ENCODE measurements at regions of chr19 and their contacts with region 1.

Region 1: GRCh38 chr19:18304458-18305310 is 18.2 kb downstream of the LSM4 start:
- DNase-seq: peak in 1 of 2 experiments; percentile 88
- H3K4me3 ChIP-seq: peak overlapping the region; percentile 8; the same call in 1 of the 2 replicates
- H3K27ac ChIP-seq: peak overlapping the region; percentile 48
- H3K4me1 ChIP-seq: peaks cover 42% of the 10 kb centered on the region
- H3K27me3 ChIP-seq: no peaks in the 10 kb centered on the region
- CTCF ChIP-seq: no peak

Region 2: GRCh38 chr19:17817668-17818363 is 486.9 kb before region 1 on chr19:
- CTCF ChIA-PET with region 1: no interaction called
- POLR2A ChIA-PET with region 1: no interaction called
- intact Hi-C with region 1: no loop called
- DNase-seq: no peak
- H3K4me3 ChIP-seq: no peak overlapping the region
- H3K27ac ChIP-seq: no peak overlapping the region
- H3K4me1 ChIP-seq: no peaks in the 10 kb centered on the region
- H3K27me3 ChIP-seq: no peaks in the 10 kb centered on the region
- CTCF ChIP-seq: no peak

Region 3: DNA sequence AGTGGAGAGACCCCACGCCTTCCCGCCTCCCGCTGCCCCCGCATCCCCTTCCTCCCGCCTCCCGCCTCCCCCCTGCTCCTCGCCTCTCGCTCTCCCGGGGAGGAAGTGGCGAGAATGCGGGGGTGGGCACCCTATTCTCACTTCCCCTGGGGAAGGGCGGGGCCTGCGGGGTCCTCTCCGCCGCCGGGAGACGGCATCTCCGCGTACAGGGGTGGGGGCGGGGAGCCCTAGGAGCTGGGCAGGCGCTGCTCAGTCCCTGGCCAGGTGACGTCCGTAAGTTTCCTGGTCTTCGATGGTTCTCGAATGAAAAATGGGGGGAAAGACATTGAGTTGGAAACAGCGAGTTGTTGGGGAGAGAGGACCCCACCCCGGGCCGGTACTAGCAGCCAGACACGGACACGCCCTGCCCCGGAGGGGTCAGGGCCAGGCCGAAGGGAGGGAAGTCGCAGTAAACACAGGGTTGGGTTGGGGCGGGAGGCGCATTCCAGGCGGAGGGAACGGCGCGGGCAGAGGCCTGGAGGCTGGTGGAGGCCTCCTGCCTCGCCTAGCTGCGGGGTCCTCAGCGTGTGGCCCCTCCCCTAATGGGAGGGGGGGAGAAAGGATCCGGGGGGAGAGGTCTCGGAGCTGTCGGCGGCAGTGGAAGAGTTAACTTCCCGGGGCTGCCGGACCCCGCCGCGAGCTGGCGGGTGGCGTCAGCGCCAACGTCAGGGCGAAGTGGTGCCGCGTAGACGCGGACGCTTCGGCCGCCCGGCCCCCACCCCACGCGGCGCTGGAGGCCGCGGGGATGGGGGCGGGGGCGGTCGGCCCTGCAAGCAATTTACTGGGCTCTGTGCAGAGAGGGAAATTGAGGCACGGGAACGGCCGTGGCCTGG is 12.9 kb before region 1 on chr19:
- CTCF ChIA-PET with region 1: interaction called, 4 read pairs
- POLR2A ChIA-PET with region 1: interaction called, 26 read pairs
- intact Hi-C with region 1: no loop called
- DNase-seq: peak; percentile 52 to 69
- H3K4me3 ChIP-seq: peak overlapping the region; percentile 62
- H3K27ac ChIP-seq: peak overlapping the region; percentile 58
- H3K4me1 ChIP-seq: peaks cover 13% of the 10 kb centered on the region
- H3K27me3 ChIP-seq: no peaks in the 10 kb centered on the region
- CTCF ChIP-seq: no peak

Region 4: DNA sequence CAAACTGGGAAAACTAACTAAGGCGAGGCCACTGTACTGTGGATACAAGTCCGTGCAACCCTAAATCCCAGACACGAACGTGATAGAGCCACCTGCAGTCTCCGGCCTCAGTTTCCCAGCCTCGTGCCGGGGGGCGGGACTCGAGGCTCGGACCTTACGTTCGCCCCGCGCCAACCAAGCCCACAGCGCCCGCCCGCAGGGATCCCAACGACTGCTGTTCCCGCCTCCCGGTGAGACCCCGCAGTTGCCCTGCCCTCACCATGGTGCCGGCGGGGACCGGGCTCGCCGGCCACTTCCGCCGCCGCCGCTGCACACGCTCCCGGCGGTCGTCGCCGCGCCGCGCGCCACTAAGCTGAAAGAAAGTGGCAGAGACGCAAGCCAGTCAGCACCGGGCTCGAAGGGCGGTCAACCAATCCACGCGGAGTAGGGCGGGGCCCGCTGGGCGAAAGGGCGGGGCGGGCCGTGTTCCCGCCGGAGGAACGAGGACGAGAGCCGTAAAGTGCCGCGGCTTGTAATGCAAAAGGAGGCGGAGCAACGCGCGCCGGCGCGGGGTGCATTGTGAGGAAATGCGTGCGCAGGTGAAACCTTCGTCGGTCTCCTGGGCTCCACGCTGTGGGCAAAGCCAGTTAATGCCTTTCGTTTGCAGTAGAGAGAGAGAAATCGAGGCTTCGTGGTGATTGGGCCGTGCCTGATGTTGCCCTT is 18.2 kb after region 1 on chr19 and contains the start of gene LSM4:
- CTCF ChIA-PET with region 1: interaction called, 3 read pairs
- POLR2A ChIA-PET with region 1: interaction called, 23 read pairs
- intact Hi-C with region 1: loop called (anchors 2 kb)
- DNase-seq: peak; percentile 97 to 99
- H3K4me3 ChIP-seq: peak within 1 kb of the TSS; percentile 76
- H3K27ac ChIP-seq: peak within 1 kb of the TSS; percentile 84
- H3K4me1 ChIP-seq: peaks cover 37% of the 10 kb centered on the region
- H3K27me3 ChIP-seq: no peaks in the 10 kb centered on the region
- CTCF ChIP-seq: no peak
- total RNA-seq, gene LSM4: 291 and 323 TPM in 2 replicates

Region 5: DNA sequence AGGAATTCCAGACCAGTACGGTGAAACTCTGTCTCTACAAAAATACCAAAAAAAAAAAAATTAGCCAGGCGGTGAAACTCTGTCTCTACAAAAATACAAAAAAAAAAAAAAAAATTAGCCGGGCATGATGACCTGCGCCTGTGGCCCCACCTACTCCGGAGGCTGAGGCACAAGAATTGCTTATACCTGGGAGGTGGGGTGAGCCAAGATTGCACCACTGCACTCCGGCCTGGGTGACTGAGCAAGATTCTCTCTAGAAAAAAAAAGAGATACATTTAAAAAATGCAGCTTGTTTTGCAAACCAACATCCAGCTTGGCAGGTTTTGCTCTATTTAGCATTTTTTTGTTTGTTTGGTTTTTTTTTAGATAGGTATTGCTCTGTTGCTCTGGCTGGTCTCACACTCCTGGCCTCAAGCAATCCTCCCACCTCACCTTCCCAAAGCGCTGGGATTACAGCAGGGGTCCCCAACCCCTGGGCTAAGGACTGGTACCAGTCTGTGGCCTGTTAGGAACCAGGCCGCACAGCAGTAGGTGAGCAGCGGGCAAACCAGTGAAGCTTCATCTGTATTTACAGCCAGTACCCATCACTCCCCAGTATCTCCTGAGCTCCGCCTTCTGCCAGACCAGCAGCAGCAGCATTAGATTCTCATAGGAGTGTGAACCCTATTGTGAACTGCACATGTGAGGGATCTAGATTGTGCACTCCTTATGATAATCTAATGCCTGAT is 29.1 kb after region 1 on chr19:
- CTCF ChIA-PET with region 1: interaction called, 13 read pairs
- POLR2A ChIA-PET with region 1: interaction called, 4 read pairs
- intact Hi-C with region 1: no loop called
- DNase-seq: peak; percentile 78 to 94
- H3K4me3 ChIP-seq: peak overlapping the region; percentile 19; the same call in 1 of the 2 replicates
- H3K27ac ChIP-seq: peak overlapping the region; percentile 89
- H3K4me1 ChIP-seq: peaks cover 40% of the 10 kb centered on the region
- H3K27me3 ChIP-seq: no peaks in the 10 kb centered on the region
- CTCF ChIP-seq: no peak

Region 6: DNA sequence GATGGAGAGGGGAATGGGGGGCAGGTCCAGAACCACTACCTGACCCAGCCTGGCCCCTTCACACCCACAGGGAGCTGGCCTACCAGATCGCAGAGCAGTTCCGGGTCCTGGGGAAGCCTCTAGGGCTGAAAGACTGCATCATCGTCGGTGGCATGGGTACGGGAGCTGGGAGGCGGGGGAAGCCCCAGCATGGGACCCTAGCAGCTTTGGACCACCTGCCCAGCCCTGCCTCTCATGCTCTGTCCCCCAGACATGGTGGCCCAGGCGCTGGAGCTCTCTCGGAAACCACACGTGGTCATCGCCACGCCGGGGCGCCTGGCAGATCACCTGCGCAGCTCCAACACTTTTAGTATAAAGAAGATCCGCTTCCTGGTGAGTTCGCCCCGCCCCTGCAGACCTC is 616.9 kb after region 1 on chr19:
- CTCF ChIA-PET with region 1: no interaction called
- POLR2A ChIA-PET with region 1: no interaction called
- intact Hi-C with region 1: no loop called
- DNase-seq: no peak
- H3K4me3 ChIP-seq: no peak overlapping the region
- H3K27ac ChIP-seq: no peak overlapping the region
- H3K4me1 ChIP-seq: peaks cover 17% of the 10 kb centered on the region
- H3K27me3 ChIP-seq: no peaks in the 10 kb centered on the region
- CTCF ChIP-seq: no peak

Region 7: DNA sequence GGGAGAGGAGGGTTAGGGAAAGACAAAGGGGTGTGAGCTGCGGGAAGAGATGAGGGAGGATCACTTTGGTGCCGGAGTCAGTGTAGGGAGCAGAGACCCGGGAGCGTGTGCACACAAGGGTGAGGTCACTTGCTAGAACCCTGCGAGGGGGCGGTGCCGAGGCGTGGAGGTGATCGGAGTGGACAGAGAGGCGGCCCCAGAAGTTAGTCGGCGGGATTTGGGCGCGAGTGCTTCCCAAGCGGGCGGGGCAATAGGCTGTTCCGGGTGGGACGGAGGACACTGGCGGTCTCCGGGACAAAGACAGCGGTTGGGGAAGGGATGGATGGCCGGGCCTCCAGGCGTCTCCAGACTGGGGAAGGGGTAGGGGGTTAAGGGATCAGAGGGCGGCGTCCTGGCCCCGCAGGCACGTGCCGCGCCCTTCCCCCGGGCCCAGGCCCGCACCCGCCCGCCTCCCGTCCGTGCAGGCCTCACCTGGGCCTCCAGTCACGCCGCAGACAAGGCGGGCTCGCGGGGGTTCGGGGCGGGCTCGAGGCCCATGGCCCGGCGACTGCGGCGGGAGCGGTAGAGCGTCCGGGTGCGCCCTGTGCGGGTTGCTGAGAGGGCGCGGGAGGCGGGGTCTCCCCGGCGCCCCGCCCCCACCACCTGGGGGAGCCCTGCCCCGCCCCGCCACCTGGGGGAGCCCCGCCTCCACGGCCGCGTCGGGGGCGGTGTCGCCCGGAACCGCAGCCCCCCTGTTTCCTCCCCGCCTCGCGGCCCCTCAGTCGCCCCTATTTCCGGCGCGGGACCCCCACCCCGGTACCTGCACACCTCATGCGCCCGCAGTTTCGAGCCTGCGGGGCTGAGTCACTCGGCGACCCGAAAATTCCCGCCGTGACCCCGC is 1323.2 kb after region 1 on chr19 and contains the start of gene LPAR2:
- CTCF ChIA-PET with region 1: no interaction called
- POLR2A ChIA-PET with region 1: no interaction called
- intact Hi-C with region 1: no loop called
- DNase-seq: peak; percentile 44 to 71
- H3K4me3 ChIP-seq: peak within 1 kb of the TSS; percentile 68
- H3K27ac ChIP-seq: peak within 1 kb of the TSS; percentile 84
- H3K4me1 ChIP-seq: peaks cover 5% of the 10 kb centered on the region; the same call in 1 of the 2 replicates
- H3K27me3 ChIP-seq: no peaks in the 10 kb centered on the region
- CTCF ChIP-seq: no peak; the same call in 1 of the 2 replicates
- total RNA-seq, gene LPAR2: 27.4 and 29.2 TPM in 2 replicates